AG04450 (cell line): ENCODE measurements at regions of chr9 and their contacts with region 1.

Region 1: GRCh38 chr9:134449221-134449894 is 123.1 kb downstream of the RXRA start:
- DNase-seq: peak; percentile 92
- H3K4me3 ChIP-seq: no peak overlapping the region
- H3K27ac ChIP-seq: no peak overlapping the region
- H3K27me3 ChIP-seq: no peaks in the 10 kb centered on the region
- CTCF ChIP-seq: peak; percentile 96

Region 2: DNA sequence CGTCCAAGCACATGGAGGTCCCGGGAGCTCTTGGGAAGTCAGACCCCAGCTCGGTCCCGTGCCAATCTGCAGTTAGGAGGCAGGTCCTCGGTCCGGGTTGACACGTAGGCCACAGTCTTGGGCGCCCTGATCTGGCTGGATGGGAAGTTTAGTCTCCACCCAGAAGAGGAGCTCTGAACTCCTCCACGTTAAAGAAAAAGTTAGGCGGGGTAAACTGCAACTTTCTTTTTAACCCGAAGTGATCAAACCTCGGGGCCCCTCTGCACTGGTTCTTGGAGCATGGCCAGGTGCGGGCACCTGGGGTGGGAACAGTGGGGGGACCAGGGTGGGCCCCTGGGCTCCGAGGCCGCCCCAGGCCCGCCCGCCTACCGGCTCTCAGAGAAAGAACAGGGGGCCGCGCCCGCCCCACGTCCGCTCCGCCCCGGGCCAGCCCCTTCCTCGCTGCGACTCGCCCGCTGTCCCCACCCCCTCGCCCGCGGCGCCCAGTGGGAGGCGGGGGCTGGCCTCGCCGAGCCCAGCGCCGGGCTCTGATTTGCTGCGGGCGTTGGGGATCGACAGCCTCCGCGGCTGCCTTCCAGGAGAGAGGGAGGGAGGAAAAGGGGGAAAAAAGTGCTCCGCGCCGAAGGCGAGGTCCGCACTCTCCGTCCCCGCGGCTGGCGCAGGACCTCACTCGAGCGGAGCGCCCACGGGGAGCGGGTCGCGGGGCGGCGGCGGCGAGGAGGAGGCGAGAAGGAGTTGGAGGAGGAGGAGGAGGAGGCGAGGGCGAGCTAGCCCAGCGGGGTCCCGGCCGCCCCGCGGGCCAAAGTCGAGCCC is 192.0 kb after region 1 on chr9 and contains the start of gene COL5A1:
- CTCF ChIA-PET with region 1: interaction called, 24 read pairs
- POLR2A ChIA-PET with region 1: interaction called, 7 read pairs
- DNase-seq: peak; percentile 74
- H3K4me3 ChIP-seq: peak within 1 kb of the TSS; percentile 85
- H3K27ac ChIP-seq: peak within 1 kb of the TSS; percentile 91
- H3K27me3 ChIP-seq: no peaks in the 10 kb centered on the region
- CTCF ChIP-seq: no peak; the same call in 1 of the 2 replicates
- polyA plus RNA-seq, gene COL5A1: 73.3 and 91.7 TPM in 2 replicates

Region 3: GRCh38 chr9:134648701-134649535 is 199.6 kb after region 1 on chr9:
- CTCF ChIA-PET with region 1: interaction called, 24 read pairs
- POLR2A ChIA-PET with region 1: interaction called, 6 read pairs
- DNase-seq: no peak
- H3K4me3 ChIP-seq: no peak overlapping the region
- H3K27ac ChIP-seq: no peak overlapping the region
- H3K27me3 ChIP-seq: no peaks in the 10 kb centered on the region
- CTCF ChIP-seq: no peak

Region 4: GRCh38 chr9:134670042-134670525 is 220.7 kb after region 1 on chr9:
- CTCF ChIA-PET with region 1: interaction called, 11 read pairs
- POLR2A ChIA-PET with region 1: no interaction called
- DNase-seq: peak; percentile 48
- H3K4me3 ChIP-seq: no peak overlapping the region
- H3K27ac ChIP-seq: no peak overlapping the region
- H3K27me3 ChIP-seq: no peaks in the 10 kb centered on the region
- CTCF ChIP-seq: no peak

Region 5: DNA sequence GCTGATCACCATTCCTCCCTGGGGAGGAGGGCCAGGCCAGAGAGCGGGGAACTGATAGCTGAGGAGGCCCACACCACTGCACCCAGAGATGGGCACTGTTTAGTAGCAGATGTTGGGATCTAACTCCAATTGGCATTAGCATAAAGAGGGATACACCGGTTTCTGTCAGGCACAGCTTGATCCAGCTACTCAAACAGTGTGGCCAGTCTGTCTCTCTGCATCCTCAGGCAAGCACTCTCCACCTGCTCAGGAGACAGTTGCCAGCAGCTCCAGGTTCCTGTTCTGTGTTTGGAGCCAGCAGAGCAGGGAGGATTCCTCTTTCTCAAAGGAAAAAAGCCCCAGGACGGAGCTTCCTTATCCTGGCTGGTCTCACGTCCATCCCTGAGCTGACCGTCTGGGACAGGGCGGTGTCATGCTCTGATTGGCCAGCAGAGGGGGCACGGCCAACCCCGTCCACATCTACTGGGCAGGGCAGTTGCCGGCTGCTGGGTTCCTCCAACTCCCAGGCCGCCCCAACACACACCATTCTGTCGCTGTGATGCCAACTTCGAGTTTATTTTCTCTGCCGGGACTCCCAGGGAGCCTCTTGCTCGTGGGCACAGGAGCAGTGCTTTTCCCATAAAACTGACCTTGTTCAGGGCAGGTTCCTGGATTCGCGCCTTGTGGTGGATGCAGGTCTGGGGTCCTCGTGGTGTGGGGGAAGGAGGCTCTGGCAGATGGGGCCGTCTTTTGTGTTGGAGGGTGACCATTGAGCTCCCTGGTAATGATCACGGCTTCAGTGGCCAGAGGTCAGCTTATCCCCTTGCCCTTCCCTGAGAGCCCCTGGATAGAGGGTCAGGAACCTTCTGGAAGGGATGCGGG is 240.2 kb after region 1 on chr9:
- CTCF ChIA-PET with region 1: interaction called, 68 read pairs
- POLR2A ChIA-PET with region 1: interaction called, 4 read pairs
- DNase-seq: peak; percentile 21
- H3K4me3 ChIP-seq: no peak overlapping the region
- H3K27ac ChIP-seq: peak overlapping the region; percentile 31
- H3K27me3 ChIP-seq: no peaks in the 10 kb centered on the region
- CTCF ChIP-seq: peak; percentile 86

Region 6: DNA sequence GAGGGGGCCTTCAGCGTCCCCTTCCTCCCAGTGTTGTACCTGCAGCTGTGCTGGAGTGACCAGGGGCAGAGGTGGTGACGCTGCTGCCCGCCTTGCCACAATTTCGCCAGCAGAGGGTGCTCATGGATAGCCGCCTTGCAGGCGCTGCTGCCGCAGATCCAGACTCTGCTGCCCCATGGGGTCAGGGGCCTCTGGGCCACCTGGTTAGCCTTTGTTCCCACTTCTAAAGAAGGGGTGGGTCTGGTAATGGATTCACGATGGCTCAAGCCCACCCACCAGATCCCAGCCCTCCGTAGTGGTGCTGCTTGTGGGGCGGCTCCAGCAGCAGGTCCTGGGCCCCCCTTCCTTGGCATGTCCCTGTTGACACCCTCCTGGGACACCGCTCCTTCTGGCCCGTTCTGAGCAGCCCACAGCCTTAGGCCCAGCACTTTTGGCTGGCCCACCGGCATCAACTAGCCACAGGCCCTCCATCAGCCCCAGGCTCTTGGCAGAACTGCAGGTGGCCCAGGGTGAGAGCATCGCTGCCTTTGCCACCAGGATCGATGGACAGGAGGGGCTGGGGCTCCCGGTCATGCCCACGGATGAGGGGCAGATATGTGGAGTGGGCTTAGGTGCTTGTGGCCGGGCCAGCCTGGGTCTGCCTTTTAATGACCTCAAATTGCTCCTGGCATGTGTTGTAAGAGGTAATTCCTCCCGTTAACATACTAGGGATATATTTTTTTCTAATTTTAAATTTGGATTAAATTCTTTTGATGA is 249.4 kb after region 1 on chr9:
- CTCF ChIA-PET with region 1: interaction called, 68 read pairs
- POLR2A ChIA-PET with region 1: no interaction called
- DNase-seq: no peak
- H3K4me3 ChIP-seq: no peak overlapping the region
- H3K27ac ChIP-seq: no peak overlapping the region
- H3K27me3 ChIP-seq: no peaks in the 10 kb centered on the region
- CTCF ChIP-seq: peak; percentile 86

Region 7: GRCh38 chr9:134738869-134739659 is 289.7 kb after region 1 on chr9:
- CTCF ChIA-PET with region 1: interaction called, 18 read pairs
- POLR2A ChIA-PET with region 1: no interaction called
- DNase-seq: peak; percentile 29
- H3K4me3 ChIP-seq: no peak overlapping the region
- H3K27ac ChIP-seq: no peak overlapping the region
- H3K27me3 ChIP-seq: no peaks in the 10 kb centered on the region
- CTCF ChIP-seq: peak; percentile 84

Region 8: DNA sequence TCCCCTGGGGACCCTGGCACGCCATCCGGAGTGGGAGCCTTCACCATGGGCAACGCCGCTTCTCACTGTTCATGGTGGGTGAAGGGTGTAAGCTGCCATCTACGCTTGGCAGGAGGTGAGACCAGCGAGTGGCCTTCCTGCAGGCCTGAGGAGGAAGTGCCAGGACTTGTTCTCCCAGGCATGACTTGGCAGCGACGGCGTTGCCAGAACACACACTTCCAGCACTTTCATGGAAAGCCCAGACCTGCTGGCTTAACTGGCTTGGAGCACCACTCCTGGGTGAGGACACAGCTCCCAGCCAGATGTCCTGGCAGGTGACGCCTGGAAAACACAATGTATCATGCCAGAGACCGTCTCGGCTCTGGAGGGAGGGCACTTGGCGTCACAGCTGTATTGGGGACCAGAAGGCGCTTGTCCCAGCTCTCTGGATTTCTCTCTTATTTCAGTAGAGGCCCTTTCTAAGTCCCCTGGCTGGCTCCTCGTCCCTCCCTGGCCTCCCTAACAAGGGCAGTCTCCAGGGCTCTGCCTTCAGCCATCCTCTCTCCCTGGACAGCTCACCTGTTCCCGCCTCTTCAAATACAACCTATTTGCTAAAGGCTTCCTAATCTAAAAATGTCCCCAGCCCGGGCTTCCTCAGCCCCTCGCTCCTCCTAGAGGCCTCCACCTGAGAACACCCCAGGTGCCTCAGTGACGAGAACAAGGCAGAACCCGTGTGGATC is 826.4 kb after region 1 on chr9:
- CTCF ChIA-PET with region 1: no interaction called
- POLR2A ChIA-PET with region 1: no interaction called
- DNase-seq: no peak
- H3K4me3 ChIP-seq: no peak overlapping the region
- H3K27ac ChIP-seq: no peak overlapping the region
- H3K27me3 ChIP-seq: no peaks in the 10 kb centered on the region
- CTCF ChIP-seq: no peak